Endothelial cell of umbilical vein (primary cell): ENCODE measurements at regions of chr4 and their contacts with region 1.

Region 1: DNA sequence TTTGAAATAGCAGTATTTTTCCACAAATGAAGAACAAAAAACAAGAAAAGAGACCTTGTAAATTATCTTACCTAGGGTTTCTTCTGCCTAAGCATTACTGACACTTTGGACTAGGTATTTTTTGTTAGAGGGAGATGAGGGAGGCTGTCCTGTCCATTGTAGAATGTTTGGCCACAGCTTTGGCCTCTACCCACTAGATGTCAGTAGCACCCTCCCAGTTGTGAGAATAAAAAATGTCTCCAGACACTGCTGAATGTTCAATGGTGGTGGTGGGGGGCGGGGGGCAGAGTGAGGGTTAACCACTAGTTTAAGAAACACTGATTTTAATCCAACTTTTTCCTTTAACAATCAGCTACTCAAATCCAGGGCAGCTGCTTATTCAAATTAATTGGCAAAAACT is 25.8 kb downstream of the OTUD4 start:
- DNase-seq: peak; percentile 73
- H3K4me3 ChIP-seq: no peak overlapping the region
- H3K27ac ChIP-seq: peak overlapping the region; percentile 46
- H3K4me1 ChIP-seq: peaks cover 28% of the 10 kb centered on the region
- H3K27me3 ChIP-seq: no peaks in the 10 kb centered on the region
- CTCF ChIP-seq: peak; percentile 53 to 66
- POLR2A ChIP-seq: no peak

Region 2: DNA sequence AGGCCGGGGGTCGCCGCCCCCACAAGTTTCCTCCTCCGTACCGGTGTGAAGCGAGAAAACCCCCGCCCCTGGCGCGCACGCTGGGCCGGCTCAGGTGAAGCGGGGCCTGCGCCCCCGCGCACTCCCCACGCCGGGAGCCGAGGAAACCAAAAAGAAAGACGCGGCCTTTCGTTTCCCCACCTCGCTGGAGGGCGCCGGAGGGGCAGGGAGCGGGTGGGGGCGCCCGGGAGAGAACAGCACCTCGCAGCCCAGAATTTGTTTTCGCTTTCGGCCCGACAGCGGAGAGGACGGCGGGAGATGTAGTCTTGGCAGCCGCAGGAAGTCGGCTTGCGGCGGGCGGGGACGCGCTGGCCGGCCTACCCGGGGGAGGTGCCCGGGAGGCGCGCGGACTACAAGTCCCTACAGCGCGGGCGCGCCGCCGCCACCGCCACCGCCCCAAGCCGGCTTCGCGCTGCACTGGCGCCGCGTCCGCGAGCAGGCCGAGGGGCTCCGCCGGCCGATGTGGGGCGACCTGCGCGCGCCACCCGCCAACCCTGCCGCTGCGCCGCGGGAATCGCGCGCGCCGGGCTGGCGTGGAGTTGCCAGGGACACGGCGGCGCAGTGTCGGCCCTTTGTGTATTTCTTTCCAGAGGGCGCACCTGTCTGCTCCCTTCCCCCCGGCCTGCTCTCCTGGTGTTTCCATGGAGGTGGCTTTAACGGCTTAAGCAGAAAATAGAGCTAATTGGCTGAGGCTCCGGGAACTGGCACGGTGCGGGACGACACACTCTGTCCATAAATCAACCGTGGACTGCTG is 25.9 kb after region 1 on chr4 and contains the start of gene OTUD4:
- CTCF ChIA-PET with region 1: interaction called, 5 read pairs
- POLR2A ChIA-PET with region 1: interaction called, 4 read pairs
- dilution Hi-C with region 1: no loop called
- intact Hi-C with region 1: loop called (anchors 1 kb)
- DNase-seq: peak; percentile 96
- H3K4me3 ChIP-seq: peak within 1 kb of the TSS; percentile 78 to 93 (median 92)
- H3K27ac ChIP-seq: peak within 1 kb of the TSS; percentile 78
- H3K4me1 ChIP-seq: peaks cover 18% of the 10 kb centered on the region
- H3K27me3 ChIP-seq: no peaks in the 10 kb centered on the region
- CTCF ChIP-seq: peak in 1 of 2 donors; percentile 25
- POLR2A ChIP-seq: no peak
- total RNA-seq, gene OTUD4: 39.5 and 40.9 TPM in 2 replicates

Region 3: DNA sequence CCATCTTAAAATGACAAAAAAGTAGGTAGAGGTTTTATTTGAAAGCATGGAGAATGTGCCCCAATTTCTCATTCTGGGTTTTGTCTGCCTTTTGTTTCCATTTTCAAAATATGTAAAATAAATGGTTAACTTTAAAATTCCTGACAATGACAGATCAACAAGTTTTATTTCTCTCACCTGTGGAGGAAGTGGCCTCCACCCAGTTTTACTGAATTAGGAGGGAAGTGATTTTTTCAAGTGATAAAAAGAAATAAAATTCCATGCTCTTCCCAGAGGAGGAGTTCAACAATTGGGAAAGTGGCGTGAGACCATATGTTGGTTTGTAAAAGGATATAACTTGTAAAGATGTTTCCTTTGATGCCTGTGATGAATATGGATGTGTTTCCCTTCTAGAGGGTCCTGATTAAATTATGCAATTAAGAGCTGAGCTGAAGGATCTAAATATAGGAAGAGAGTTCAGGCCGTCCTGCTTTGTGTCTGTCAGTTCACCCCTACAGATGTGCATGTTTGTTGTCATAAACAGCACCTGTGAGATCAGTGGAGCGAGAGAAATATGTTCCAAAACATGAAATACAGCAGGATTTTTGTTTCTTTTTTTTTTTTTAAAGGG is 346.6 kb after region 1 on chr4:
- CTCF ChIA-PET with region 1: interaction called, 3 read pairs
- POLR2A ChIA-PET with region 1: no interaction called
- dilution Hi-C with region 1: no loop called
- intact Hi-C with region 1: loop called (anchors 5 kb)
- DNase-seq: peak; percentile 91
- H3K4me3 ChIP-seq: no peak overlapping the region
- H3K27ac ChIP-seq: peak overlapping the region; percentile 27
- H3K4me1 ChIP-seq: peaks cover 54% of the 10 kb centered on the region
- H3K27me3 ChIP-seq: no peaks in the 10 kb centered on the region
- CTCF ChIP-seq: no peak
- POLR2A ChIP-seq: no peak

Region 4: GRCh38 chr4:145557720-145558119 is 403.1 kb after region 1 on chr4:
- CTCF ChIA-PET with region 1: interaction called, 4 read pairs
- POLR2A ChIA-PET with region 1: no interaction called
- dilution Hi-C with region 1: no loop called
- intact Hi-C with region 1: loop called (anchors 1 kb)
- DNase-seq: peak; percentile 81
- H3K4me3 ChIP-seq: no peak overlapping the region
- H3K27ac ChIP-seq: no peak overlapping the region
- H3K4me1 ChIP-seq: peaks cover 11% of the 10 kb centered on the region
- H3K27me3 ChIP-seq: no peaks in the 10 kb centered on the region
- CTCF ChIP-seq: peak; percentile 88 to 89
- POLR2A ChIP-seq: no peak

Region 5: GRCh38 chr4:146191766-146192458 is 1037.3 kb after region 1 on chr4:
- CTCF ChIA-PET with region 1: no interaction called
- POLR2A ChIA-PET with region 1: no interaction called
- dilution Hi-C with region 1: no loop called
- intact Hi-C with region 1: no loop called
- DNase-seq: no peak
- H3K4me3 ChIP-seq: no peak overlapping the region
- H3K27ac ChIP-seq: no peak overlapping the region
- H3K4me1 ChIP-seq: no peaks in the 10 kb centered on the region
- H3K27me3 ChIP-seq: no peaks in the 10 kb centered on the region
- CTCF ChIP-seq: no peak
- POLR2A ChIP-seq: no peak